HEK293T (cell line): ENCODE measurements at regions of chr17 and their contacts with region 1.

Region 1: GRCh38 chr17:42577532-42578281 is at the start of gene PSMC3IP:
- DNase-seq: peak; percentile 96

Region 2: DNA sequence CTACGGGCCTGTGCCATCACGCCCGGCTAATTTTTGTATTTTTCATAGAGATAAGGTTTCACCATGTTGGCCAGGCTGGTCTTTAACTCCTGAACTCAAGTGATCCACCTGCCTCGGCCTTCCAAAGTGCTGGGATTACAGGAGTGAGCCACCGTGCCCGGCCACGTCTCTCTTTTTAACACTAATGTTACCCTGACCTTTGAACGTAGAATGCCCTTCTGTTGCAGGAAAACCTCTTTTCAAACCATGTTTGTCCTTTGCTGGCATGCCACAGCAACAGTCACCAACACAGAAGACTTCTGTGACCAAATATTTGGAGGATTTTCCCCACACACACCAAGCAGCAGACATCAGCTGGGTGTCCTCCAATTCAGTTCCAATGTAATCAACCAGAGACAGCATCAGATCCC is 32.8 kb before region 1 on chr17:
- CTCF ChIA-PET with region 1: no interaction called
- POLR2A ChIA-PET with region 1: no interaction called
- DNase-seq: no peak

Region 3: GRCh38 chr17:42566883-42567573 is 10.7 kb before region 1 on chr17 and contains the start of gene MLX:
- CTCF ChIA-PET with region 1: interaction called, 13 read pairs
- POLR2A ChIA-PET with region 1: interaction called, 59 read pairs
- DNase-seq: peak; percentile 99

Region 4: DNA sequence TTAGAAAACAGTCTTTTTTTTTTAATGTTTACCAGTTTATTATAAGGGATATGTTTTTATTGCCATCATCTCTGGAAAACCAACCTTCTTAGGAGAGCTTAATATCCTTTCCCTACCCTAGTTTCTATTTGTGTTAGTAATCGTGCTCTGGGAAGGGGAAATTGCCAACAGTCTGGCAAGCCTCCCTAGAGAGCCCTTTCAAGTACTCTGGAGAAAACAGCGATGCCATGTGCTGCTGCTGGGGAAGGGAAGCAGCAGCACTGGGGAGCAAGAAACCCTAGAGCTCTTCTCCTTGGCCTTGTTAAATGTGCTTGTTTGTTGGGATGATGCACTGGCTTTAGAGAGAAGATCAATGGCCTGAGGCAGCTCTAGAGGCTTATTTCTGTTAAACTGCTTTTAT is 21.2 kb after region 1 on chr17:
- CTCF ChIA-PET with region 1: interaction called, 5 read pairs
- POLR2A ChIA-PET with region 1: interaction called, 11 read pairs
- DNase-seq: no peak

Region 5: GRCh38 chr17:42618442-42619150 is 40.9 kb after region 1 on chr17:
- CTCF ChIA-PET with region 1: interaction called, 5 read pairs
- POLR2A ChIA-PET with region 1: interaction called, 14 read pairs
- DNase-seq: no peak

Region 6: DNA sequence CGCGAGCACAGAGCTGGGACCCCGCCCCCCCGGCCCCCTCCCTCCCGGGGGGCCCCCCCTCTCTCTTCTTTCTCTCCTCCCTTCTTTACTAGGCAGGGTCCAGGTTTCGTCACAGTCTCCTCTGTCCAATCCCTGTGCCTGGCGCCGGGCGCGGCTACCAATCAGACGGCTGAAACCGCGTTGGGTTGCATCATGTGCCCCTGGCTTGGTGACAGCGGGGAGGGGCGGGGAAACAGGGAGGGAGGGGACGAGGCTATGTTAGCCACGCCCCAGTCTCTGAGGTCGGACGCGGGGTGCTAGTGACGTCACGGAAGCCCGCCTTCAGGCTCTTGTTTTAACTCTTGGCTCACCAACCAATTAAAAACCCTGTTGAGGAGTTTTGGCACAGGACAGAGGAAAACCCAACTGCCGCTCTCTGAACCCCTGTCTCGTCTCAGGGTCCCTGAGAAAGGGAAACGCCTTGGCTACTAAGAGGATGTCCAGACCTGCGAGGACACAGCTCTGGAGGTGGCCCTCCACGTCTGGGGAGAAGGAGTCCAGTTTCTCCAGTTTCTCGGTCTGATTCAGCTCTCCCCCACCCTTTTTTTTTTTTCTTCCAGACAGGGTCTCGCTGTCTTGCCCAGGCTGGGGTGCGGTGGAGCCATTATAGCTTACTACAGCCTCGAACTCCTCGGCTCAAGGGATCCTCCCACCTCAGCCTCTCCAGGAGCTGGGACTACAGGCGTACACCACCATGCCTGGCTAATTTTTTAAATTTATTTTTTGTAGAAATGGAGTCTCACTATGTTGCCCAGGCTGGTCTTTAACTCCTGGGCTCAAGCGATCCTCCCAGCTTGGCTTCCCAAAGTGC is 99.5 kb after region 1 on chr17:
- CTCF ChIA-PET with region 1: interaction called, 43 read pairs
- POLR2A ChIA-PET with region 1: interaction called, 122 read pairs
- DNase-seq: peak; percentile 96

Region 7: DNA sequence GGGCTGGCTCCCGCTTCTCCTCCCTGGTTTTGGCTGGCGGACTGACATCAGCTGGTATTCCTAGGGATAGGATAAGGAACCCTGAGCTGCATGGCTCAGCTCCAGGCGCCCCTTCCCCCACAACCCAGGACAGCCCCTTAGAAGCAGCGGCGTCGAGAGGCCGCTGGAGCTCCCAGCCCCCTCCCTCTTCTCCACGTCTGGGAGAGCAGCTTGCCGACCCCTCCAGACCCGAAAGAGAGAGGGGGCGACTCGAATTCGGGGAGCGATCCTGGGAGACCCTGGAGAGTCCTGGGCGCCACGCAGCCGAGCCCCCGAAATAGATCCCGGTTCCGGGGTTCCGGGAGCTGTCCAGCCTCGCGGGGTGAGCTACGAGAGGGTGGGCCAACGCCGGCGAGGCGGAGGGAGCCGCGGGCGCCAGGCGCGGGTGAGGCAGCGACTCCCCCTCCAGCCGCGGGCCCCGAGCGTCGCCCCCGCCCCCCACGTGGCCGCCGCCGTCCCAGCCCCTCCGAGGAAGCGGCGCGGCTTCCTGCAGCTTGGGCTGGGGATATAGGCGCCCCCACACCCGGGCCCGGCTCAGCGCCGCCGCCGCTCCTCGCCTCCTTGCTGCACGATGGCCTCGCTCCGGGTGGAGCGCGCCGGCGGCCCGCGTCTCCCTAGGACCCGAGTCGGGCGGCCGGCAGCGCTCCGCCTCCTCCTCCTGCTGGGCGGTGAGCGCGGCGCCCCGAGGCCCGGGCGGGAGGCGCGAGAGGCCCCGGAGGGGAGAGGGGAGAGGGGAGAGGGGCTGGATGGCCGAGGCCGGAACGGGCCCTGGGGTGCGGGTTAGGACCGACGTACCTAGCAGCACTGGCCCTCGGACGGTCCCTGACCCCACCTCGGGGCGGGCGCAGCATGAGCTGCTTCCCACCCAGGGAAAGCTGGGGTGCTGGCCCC is 183.2 kb after region 1 on chr17 and contains the start of gene RAMP2:
- CTCF ChIA-PET with region 1: interaction called, 11 read pairs
- POLR2A ChIA-PET with region 1: interaction called, 16 read pairs
- DNase-seq: no peak